GM10248 (cell line): ENCODE measurements at regions of chr13 and their contacts with region 1.

Region 1: DNA sequence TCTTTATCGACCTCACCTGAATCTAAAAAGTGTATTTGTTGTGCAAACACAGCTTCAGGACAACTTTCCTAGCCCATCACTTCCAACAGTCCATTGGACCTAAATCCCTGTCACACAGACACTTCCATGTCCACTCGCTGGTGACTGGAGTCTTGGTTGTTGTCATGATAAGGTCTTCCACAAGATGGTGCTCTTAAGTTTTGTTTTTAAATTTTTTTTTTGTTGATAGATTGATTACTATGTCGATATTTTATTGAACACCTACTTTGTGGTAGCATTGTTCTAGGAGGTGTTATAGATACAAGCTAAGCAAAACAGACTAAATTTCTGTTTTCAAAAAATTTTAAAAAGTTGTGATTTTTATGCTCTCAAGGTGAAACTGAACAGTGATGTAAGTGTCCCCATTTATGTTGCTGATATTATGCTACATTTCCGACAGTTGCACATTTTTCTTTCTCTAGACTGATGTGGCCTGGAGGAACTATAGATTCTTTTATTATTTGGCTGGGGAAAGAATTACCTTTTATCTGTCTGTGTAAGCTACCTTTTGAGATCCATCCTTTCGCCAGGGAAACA is 8.1 kb upstream of the ERICH6B start:
- DNase-seq: peak; percentile 34
- CTCF ChIP-seq: peak; percentile 46

Region 2: DNA sequence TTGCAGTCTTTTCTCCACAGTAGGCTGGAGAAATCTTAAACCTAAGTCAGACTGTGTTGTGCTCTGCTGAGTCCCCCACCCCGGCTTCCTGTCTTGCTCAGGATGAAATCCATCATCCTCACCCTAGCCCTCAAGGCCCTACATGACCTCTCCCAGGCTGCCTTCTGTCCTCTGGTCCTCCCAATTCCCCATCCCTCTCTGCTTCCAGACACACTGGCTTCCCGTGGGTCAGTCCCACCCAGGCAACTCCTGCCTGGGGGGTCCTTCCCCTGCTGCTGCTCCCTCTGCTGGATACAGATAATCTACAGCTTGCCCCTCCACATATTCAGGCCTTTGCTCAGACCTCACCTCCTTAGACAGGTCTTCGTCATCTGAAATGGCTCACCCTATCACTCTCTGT is 60.1 kb after region 1 on chr13:
- CTCF ChIA-PET with region 1: interaction called, 12 read pairs
- POLR2A ChIA-PET with region 1: no interaction called
- DNase-seq: no peak
- CTCF ChIP-seq: no peak

Region 3: GRCh38 chr13:45700971-45701900 is 77.6 kb after region 1 on chr13:
- CTCF ChIA-PET with region 1: interaction called, 31 read pairs
- POLR2A ChIA-PET with region 1: no interaction called
- DNase-seq: peak; percentile 29
- CTCF ChIP-seq: peak; percentile 59

Region 4: GRCh38 chr13:45711951-45712350 is 88.3 kb after region 1 on chr13:
- CTCF ChIA-PET with region 1: interaction called, 53 read pairs
- POLR2A ChIA-PET with region 1: no interaction called
- DNase-seq: no peak
- CTCF ChIP-seq: no peak

Region 5: GRCh38 chr13:45718063-45718462 is 94.5 kb after region 1 on chr13:
- CTCF ChIA-PET with region 1: interaction called, 53 read pairs
- POLR2A ChIA-PET with region 1: no interaction called
- DNase-seq: peak; percentile 48
- CTCF ChIP-seq: peak; percentile 69

Region 6: GRCh38 chr13:45728759-45729158 is 105.2 kb after region 1 on chr13:
- CTCF ChIA-PET with region 1: interaction called, 36 read pairs
- POLR2A ChIA-PET with region 1: no interaction called
- DNase-seq: peak; percentile 34
- CTCF ChIP-seq: peak; percentile 36

Region 7: GRCh38 chr13:46126552-46127357 is 503.2 kb after region 1 on chr13:
- CTCF ChIA-PET with region 1: interaction called, 18 read pairs
- POLR2A ChIA-PET with region 1: no interaction called
- DNase-seq: peak; percentile 58
- CTCF ChIP-seq: peak; percentile 88

Region 8: GRCh38 chr13:46728777-46729176 is 1105.2 kb after region 1 on chr13:
- CTCF ChIA-PET with region 1: no interaction called
- POLR2A ChIA-PET with region 1: no interaction called
- DNase-seq: peak; percentile 24
- CTCF ChIP-seq: no peak